HepG2 (cell line): ENCODE measurements at regions of chrX and their contacts with region 1.

Region 1: GRCh38 chrX:132292793-132293192 is 73.5 kb upstream of the RAP2C start:
- DNase-seq: peak; percentile 57
- ATAC-seq: peak; percentile 68
- H3K4me3 ChIP-seq: no peak overlapping the region
- H3K27ac ChIP-seq: peak overlapping the region; percentile 38
- H3K4me1 ChIP-seq: peaks cover 9% of the 10 kb centered on the region
- H3K27me3 ChIP-seq: no peaks in the 10 kb centered on the region
- CTCF ChIP-seq: peak; percentile 77
- EP300 ChIP-seq: no peak
- POLR2A ChIP-seq: no peak
- RAD21 ChIP-seq: peak; percentile 57

Region 2: GRCh38 chrX:131778269-131779218 is 514.2 kb before region 1 on chrX:
- CTCF ChIA-PET with region 1: no interaction called
- POLR2A ChIA-PET with region 1: no interaction called
- in situ Hi-C with region 1: no loop called
- intact Hi-C with region 1: no loop called
- DNase-seq: no peak
- ATAC-seq: no peak
- H3K4me3 ChIP-seq: no peak overlapping the region
- H3K27ac ChIP-seq: no peak overlapping the region
- H3K4me1 ChIP-seq: no peaks in the 10 kb centered on the region
- H3K27me3 ChIP-seq: no peaks in the 10 kb centered on the region
- CTCF ChIP-seq: no peak
- EP300 ChIP-seq: no peak
- POLR2A ChIP-seq: no peak
- RAD21 ChIP-seq: no peak

Region 3: DNA sequence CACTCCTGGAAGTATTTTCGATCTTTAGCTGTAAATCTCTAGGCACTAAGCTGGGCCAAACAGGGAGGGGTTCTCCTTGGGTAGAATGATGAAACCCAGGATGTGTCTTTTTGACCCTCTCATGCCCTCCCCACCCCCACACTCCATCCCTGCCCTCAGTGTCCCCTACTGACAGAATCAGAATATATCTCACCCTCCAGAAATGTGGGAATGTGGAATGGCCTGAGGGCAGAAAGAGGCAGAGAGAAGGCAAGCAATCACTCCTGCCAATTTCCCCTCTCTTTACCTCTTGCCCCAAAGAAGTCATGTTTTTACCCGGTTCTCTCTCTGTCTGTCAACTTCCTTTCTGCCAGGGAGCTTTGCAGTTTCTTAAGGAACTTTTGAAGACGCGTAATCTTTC is 107.9 kb before region 1 on chrX:
- CTCF ChIA-PET with region 1: no interaction called
- POLR2A ChIA-PET with region 1: no interaction called
- in situ Hi-C with region 1: no loop called
- intact Hi-C with region 1: no loop called
- DNase-seq: no peak
- ATAC-seq: no peak
- H3K4me3 ChIP-seq: no peak overlapping the region
- H3K27ac ChIP-seq: no peak overlapping the region
- H3K4me1 ChIP-seq: peaks cover 16% of the 10 kb centered on the region
- H3K27me3 ChIP-seq: no peaks in the 10 kb centered on the region
- CTCF ChIP-seq: no peak
- EP300 ChIP-seq: no peak
- POLR2A ChIP-seq: no peak
- RAD21 ChIP-seq: no peak

Region 4: GRCh38 chrX:132375934-132376333 is 83.1 kb after region 1 on chrX:
- CTCF ChIA-PET with region 1: no interaction called
- POLR2A ChIA-PET with region 1: no interaction called
- in situ Hi-C with region 1: loop called (anchors 5 kb)
- intact Hi-C with region 1: loop called (anchors 2 kb)
- DNase-seq: no peak
- ATAC-seq: peak; percentile 57; the same call in 2 of the 3 replicates
- H3K4me3 ChIP-seq: no peak overlapping the region
- H3K27ac ChIP-seq: no peak overlapping the region
- H3K4me1 ChIP-seq: peaks cover 61% of the 10 kb centered on the region
- H3K27me3 ChIP-seq: no peaks in the 10 kb centered on the region
- CTCF ChIP-seq: peak; percentile 32
- EP300 ChIP-seq: no peak
- POLR2A ChIP-seq: no peak
- RAD21 ChIP-seq: no peak

Region 5: GRCh38 chrX:132615391-132616131 is 322.8 kb after region 1 on chrX:
- CTCF ChIA-PET with region 1: interaction called, 8 read pairs
- POLR2A ChIA-PET with region 1: interaction called, 3 read pairs
- in situ Hi-C with region 1: loop called (anchors 10 kb)
- intact Hi-C with region 1: loop called (anchors 2 kb)
- DNase-seq: peak; percentile 44
- ATAC-seq: peak; percentile 79
- H3K4me3 ChIP-seq: no peak overlapping the region
- H3K27ac ChIP-seq: no peak overlapping the region
- H3K4me1 ChIP-seq: peaks cover 50% of the 10 kb centered on the region
- H3K27me3 ChIP-seq: no peaks in the 10 kb centered on the region
- CTCF ChIP-seq: peak; percentile 69
- EP300 ChIP-seq: no peak
- POLR2A ChIP-seq: no peak
- RAD21 ChIP-seq: 0 out of 2 replicates have a peak, but pooled peaks have one; percentile 23